Endothelial cell of umbilical vein (primary cell): ENCODE measurements at regions of chr3 and their contacts with region 1.

Region 1: GRCh38 chr3:148036331-148036881 is 627.2 kb downstream of the ZIC1 start:
- DNase-seq: peak; percentile 87
- H3K4me3 ChIP-seq: no peak overlapping the region
- H3K27ac ChIP-seq: peak overlapping the region; percentile 80
- H3K4me1 ChIP-seq: peaks cover 13% of the 10 kb centered on the region
- H3K27me3 ChIP-seq: no peaks in the 10 kb centered on the region
- CTCF ChIP-seq: no peak
- POLR2A ChIP-seq: peak; percentile 17

Region 2: DNA sequence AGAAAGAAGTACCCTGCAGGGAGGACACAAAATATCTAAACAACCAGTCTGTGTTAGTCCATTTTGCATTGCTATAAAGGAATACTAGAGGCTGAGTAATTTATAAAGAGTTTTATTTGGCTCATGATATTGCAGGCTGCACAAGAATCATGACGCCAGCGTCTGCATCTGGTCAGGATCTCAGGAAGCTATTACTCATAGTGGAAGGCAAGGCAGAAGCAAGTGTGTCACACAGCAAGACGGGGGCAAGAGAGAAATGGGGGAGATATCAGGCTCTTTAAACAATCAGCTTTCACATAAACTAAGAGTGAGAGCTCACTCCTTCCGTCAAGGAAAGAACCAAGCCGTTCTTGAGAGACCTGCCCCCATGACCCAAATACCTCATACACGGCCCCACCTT is 12.4 kb before region 1 on chr3:
- CTCF ChIA-PET with region 1: interaction called, 3 read pairs
- POLR2A ChIA-PET with region 1: no interaction called
- dilution Hi-C with region 1: no loop called
- intact Hi-C with region 1: loop called (anchors 1 kb)
- DNase-seq: peak; percentile 92
- H3K4me3 ChIP-seq: no peak overlapping the region
- H3K27ac ChIP-seq: peak overlapping the region; percentile 80
- H3K4me1 ChIP-seq: peaks cover 17% of the 10 kb centered on the region
- H3K27me3 ChIP-seq: no peaks in the 10 kb centered on the region
- CTCF ChIP-seq: no peak
- POLR2A ChIP-seq: no peak